ENCODE measurements at regions of chr10 and their contacts with region 1.

Region 1: DNA sequence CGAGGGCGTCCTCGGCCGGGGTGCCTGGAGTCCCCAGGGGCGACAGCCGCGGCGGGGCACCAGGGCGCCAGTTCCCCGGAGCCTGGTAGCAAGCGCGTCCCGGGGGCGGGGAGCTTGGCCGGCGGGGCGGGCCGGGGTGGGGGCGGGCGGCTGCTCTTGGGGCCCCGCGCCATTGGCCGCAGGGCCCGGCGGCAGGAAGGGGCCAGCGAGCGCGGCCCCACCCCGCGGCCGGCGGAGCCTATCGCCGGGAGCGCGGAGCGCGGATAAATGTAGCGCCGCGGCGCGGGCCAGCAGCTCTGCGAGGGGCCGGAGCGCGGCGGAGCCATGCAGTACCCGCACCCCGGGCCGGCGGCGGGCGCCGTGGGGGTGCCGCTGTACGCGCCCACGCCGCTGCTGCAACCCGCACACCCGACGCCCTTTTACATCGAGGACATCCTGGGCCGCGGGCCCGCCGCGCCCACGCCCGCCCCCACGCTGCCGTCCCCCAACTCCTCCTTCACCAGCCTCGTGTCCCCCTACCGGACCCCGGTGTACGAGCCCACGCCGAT is at the start of gene HHEX:
- DNase-seq: peak; percentile 58 to 66
- ATAC-seq: peak; percentile 58 to 86 (median 72)
- H3K4me3 ChIP-seq: peak within 1 kb of the TSS; percentile 60 to 78 (median 67)
- H3K27ac ChIP-seq: peak within 1 kb of the TSS; percentile 75 to 95 (median 94)
- H3K4me1 ChIP-seq: peaks cover 0 to 42% (median 25%) of the 10 kb centered on the region in 9 donors
- H3K27me3 ChIP-seq: peaks cover 0 to 66% (median 57%) of the 10 kb centered on the region in 7 donors
- CTCF ChIP-seq: no peak
- total RNA-seq, gene HHEX: 1.8 to 8.7 (median 4.3) TPM

Region 2: GRCh38 chr10:92177546-92177945 is 512.2 kb before region 1 on chr10:
- intact Hi-C with region 1: no loop called
- DNase-seq: no peak
- ATAC-seq: no peak
- H3K4me3 ChIP-seq: no peak overlapping the region
- H3K27ac ChIP-seq: no peak overlapping the region
- H3K4me1 ChIP-seq: peaks cover 0 to 32% (median 11%) of the 10 kb centered on the region in 9 donors
- H3K27me3 ChIP-seq: no peaks in the 10 kb centered on the region
- CTCF ChIP-seq: no peak

Region 3: GRCh38 chr10:92530421-92530820 is 159.3 kb before region 1 on chr10:
- intact Hi-C with region 1: loop called in 1 of 10 experiments (anchors 10 kb)
- DNase-seq: no peak
- ATAC-seq: no peak
- H3K4me3 ChIP-seq: no peak overlapping the region
- H3K27ac ChIP-seq: no peak overlapping the region
- H3K4me1 ChIP-seq: no peaks in the 10 kb centered on the region
- H3K27me3 ChIP-seq: no peaks in the 10 kb centered on the region
- CTCF ChIP-seq: no peak

Region 4: GRCh38 chr10:92810934-92811532 is 121.3 kb after region 1 on chr10:
- intact Hi-C with region 1: loop called in 4 of 10 experiments (anchors 5 to 10 kb)
- DNase-seq: no peak
- ATAC-seq: no peak
- H3K4me3 ChIP-seq: no peak overlapping the region
- H3K27ac ChIP-seq: no peak overlapping the region
- H3K4me1 ChIP-seq: peaks cover 0 to 10% (median 0%) of the 10 kb centered on the region in 9 donors
- H3K27me3 ChIP-seq: peaks cover 0 to 11% (median 0%) of the 10 kb centered on the region in 7 donors
- CTCF ChIP-seq: no peak

Region 5: DNA sequence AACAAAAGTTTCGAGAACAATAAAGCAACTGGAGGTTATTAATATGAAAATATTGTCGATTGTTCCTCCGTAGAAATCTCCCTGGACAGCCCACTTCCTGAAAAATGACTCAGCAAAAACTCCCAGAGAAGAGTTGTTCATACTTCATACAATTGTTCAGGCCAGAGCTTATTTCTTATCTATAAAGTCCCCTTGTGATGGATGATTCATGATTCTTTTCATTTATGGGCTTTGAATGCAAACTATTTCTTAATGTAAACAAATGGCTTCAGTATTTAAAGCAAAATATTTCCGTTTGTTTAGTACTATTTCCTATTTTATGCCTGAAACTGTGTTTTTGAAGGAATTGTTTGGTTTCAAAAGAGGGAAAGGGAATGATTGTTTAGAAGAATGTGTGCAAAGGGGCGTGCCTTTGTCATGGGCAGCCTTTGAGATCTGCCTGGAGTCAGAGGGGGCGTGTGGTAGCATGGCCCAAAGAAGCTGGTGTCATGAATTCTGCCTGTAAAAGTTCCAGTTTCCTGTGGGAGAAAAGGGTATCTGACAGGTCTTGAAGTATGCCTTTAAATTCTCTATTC is 132.4 kb after region 1 on chr10:
- intact Hi-C with region 1: loop called in 5 of 10 experiments (anchors 2 to 10 kb)
- DNase-seq: no peak
- ATAC-seq: peak in 7 of 8 donors; percentile 58 to 91 (median 78)
- H3K4me3 ChIP-seq: no peak overlapping the region
- H3K27ac ChIP-seq: peak overlapping the region in 6 of 10 donors; percentile 12 to 74 (median 61)
- H3K4me1 ChIP-seq: peaks cover 0 to 27% (median 10%) of the 10 kb centered on the region in 9 donors
- H3K27me3 ChIP-seq: no peaks in the 10 kb centered on the region
- CTCF ChIP-seq: no peak

Region 6: GRCh38 chr10:92873029-92873428 is 183.3 kb after region 1 on chr10:
- intact Hi-C with region 1: loop called in 1 of 10 experiments (anchors 5 kb)
- DNase-seq: no peak
- ATAC-seq: no peak
- H3K4me3 ChIP-seq: no peak overlapping the region
- H3K27ac ChIP-seq: peak overlapping the region in 1 of 10 donors; percentile 43
- H3K4me1 ChIP-seq: peaks cover 0 to 38% (median 8%) of the 10 kb centered on the region in 9 donors
- H3K27me3 ChIP-seq: no peaks in the 10 kb centered on the region
- CTCF ChIP-seq: no peak

Measured in heart right ventricle (tissue), 16 donors.